ENCODE measurements at regions of chr14 and their contacts with region 1.

Region 1: GRCh38 chr14:69493791-69494190 is 9.3 kb downstream of the PLEKHD1 start:
- DNase-seq: no peak
- H3K4me3 ChIP-seq: no peak overlapping the region
- H3K27ac ChIP-seq: no peak overlapping the region
- H3K4me1 ChIP-seq: peaks cover 7% of the 10 kb centered on the region
- H3K27me3 ChIP-seq: no peaks in the 10 kb centered on the region
- CTCF ChIP-seq: no peak

Region 2: DNA sequence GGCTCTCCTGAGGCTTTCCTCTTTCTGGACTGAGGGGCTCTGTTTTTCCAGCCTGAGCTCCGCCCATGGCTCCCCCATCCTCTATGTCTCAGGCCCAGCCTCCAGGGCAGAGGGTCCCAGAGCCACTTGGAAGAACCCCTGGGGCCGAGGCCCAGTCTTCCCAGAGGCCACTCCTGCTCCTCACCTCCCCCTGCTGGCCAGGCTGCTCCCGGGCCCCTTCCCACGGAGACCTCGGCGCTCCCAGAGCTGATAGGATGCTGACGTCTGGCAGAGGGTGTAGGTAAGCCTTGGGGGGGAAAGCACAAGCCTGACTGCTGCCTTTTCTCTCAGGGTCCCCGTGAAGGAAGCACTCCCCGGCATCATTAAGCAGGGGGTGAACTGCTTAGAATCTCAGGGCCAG is 147.1 kb before region 1 on chr14:
- CTCF ChIA-PET with region 1: no interaction called
- POLR2A ChIA-PET with region 1: interaction called, 12 read pairs
- intact Hi-C with region 1: no loop called
- DNase-seq: peak; percentile 48
- H3K4me3 ChIP-seq: no peak overlapping the region
- H3K27ac ChIP-seq: no peak overlapping the region
- H3K4me1 ChIP-seq: no peaks in the 10 kb centered on the region
- H3K27me3 ChIP-seq: no peaks in the 10 kb centered on the region
- CTCF ChIP-seq: peak; percentile 67

Measured in A673 (cell line).